ENCODE measurements at regions of chr20 and their contacts with region 1.

Region 1: DNA sequence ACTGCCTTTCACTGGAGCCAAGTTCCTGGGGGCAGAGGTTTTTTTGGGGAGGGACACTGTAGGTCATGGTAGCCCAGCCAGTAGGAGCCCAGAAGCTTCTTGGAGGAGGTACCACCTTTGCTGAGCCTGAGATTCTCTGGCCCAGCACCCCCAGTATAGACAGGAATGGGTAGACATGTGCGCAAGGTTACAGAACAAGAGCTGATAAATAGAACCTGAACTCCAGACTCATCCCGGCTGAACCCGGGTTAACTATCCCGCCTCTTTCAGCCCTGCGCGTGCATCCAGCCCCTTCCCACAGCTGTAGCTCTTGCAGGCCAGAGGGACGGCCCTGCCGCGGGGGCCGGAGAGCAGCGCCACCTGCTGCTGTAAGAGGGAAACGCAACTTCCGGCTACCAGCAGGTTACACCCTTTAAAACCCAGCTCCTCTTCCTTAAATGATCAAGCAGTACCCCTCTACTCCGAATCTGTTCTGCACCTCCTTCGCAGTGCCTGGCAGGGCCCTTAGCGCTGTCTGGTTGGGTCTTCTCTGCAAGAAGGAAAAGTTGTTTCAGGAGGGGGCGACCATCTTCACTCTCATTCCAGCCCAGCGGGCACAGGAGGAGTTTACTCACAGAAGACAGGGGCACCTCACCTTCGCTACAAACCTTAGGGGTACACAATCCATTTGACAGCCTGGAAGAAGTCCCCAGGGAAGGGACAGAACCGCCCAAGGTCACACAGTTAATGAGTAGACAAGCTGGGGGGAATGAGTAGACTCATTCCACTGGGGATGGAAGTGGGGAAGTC is 7.5 kb downstream of the SRXN1 start:
- H3K4me3 ChIP-seq: no peak overlapping the region
- H3K27ac ChIP-seq: no peak overlapping the region
- H3K4me1 ChIP-seq: no peaks in the 10 kb centered on the region
- CTCF ChIP-seq: peak; percentile 96

Region 2: GRCh38 chr20:354298-355064 is 291.0 kb before region 1 on chr20:
- CTCF ChIA-PET with region 1: interaction called, 14 read pairs
- POLR2A ChIA-PET with region 1: no interaction called
- H3K4me3 ChIP-seq: no peak overlapping the region
- H3K27ac ChIP-seq: no peak overlapping the region
- H3K4me1 ChIP-seq: no peaks in the 10 kb centered on the region
- CTCF ChIP-seq: peak; percentile 94

Region 3: DNA sequence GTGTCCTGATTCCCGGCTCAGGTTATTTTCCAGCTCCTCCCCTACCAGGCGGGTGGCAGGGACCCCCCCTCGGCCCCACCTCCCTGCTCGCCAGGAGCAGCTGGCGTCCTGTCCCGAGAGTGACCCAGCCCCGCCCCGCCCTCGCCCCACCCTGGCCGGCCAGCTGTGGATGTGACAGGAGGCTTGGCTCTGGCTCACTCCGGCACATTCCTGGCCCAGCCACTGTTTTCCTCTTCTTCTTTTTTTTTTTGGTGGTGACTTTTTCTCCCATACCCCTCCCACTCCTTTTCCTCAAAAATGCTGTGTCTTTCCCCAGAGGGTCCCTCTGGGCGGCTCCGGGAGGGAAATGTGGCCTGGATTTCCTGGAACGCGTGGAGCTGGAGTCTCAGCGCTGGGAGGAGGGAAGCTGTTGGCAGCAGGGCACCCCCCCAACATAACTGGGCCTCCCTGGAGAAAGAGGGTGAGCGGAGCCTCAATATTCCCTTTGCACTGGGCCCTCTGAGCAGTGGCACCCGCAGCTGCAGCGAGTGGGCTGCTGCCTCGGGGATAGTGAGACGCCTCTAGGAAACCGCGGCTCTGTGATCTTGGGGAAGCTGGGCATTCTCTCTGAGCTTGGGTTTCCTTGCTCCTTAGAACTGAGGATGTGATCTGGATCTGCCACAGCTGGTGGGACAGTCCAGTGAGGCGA is 73.6 kb before region 1 on chr20:
- CTCF ChIA-PET with region 1: interaction called, 21 read pairs
- POLR2A ChIA-PET with region 1: no interaction called
- H3K4me3 ChIP-seq: no peak overlapping the region
- H3K27ac ChIP-seq: no peak overlapping the region
- H3K4me1 ChIP-seq: no peaks in the 10 kb centered on the region
- CTCF ChIP-seq: no peak

Region 4: DNA sequence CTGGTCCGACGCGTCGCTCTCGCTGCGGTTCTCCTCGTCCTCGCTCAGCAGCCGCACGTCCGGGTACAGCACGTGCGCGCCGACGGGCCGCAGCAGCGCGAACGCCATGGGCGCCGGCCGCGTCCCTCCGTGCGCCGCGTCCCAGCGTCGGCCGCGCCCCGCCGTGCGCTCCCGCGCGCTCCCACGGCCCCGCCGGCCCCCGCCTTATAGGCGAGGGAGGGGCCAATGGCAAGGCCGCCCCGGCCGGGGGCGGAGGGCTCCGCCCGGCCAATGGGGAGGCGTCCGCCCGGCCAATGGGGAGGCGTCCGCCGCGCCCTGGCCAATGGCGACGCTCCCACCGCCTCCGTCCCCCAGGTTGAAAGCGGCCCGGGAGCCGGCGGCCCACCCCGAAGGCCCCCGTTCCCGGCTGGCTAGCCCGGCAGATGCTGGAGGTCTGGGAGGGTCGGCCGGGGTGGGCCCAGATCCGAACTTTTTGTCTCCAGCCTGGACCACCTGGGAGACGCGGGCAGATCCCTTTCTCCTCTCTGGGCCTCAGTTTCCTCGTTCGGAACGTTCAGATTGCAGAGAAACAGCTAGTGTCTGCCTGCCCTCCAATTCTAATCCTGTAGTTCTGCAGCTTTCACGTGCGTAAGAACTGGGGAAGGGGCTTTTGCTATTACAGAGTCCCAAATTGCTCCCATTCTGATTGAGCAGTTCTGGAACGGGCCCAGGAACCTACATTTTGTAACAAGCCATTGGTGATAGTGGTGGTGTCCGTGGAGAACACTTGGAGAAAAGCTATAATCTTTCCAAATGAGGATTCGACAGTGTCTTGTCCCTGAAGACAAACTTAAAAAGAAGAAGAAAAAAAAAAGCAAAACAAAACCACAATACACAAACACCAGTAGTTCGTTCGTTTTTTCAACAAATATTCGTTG is 35.1 kb before region 1 on chr20 and contains the start of gene TCF15:
- CTCF ChIA-PET with region 1: interaction called, 10 read pairs
- POLR2A ChIA-PET with region 1: no interaction called
- H3K4me3 ChIP-seq: no peak within 1 kb of the TSS
- H3K27ac ChIP-seq: no peak within 1 kb of the TSS
- H3K4me1 ChIP-seq: no peaks in the 10 kb centered on the region
- CTCF ChIP-seq: no peak

Region 5: GRCh38 chr20:658731-659291 is 13.3 kb after region 1 on chr20:
- CTCF ChIA-PET with region 1: interaction called, 11 read pairs
- POLR2A ChIA-PET with region 1: no interaction called
- H3K4me3 ChIP-seq: no peak overlapping the region
- H3K27ac ChIP-seq: no peak overlapping the region
- H3K4me1 ChIP-seq: no peaks in the 10 kb centered on the region
- CTCF ChIP-seq: no peak

Region 6: GRCh38 chr20:676977-677351 is 31.5 kb after region 1 on chr20:
- CTCF ChIA-PET with region 1: no interaction called
- POLR2A ChIA-PET with region 1: no interaction called
- H3K4me3 ChIP-seq: no peak overlapping the region
- H3K27ac ChIP-seq: no peak overlapping the region
- H3K4me1 ChIP-seq: peaks cover 6% of the 10 kb centered on the region
- CTCF ChIP-seq: no peak

Region 7: DNA sequence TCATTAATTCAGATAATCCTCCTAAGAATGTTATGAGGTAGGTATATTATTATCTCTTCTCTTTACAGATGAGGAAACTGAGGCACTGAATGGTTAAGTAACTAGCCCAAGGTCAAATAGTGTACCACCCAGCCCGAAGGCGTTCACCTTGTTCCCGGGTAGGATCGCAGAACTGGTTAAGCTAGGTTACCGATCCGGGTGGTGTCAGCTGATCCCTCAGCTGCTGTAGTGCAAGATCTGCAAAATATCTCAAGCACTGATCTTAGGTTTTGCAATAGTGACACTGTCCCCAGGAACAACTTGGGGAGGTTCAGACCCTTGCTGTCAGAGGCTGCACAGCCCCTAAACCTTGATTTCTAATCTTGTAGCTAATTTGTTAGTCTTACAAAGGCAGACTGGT is 94.6 kb after region 1 on chr20:
- CTCF ChIA-PET with region 1: interaction called, 15 read pairs
- POLR2A ChIA-PET with region 1: no interaction called
- H3K4me3 ChIP-seq: no peak overlapping the region
- H3K27ac ChIP-seq: no peak overlapping the region
- H3K4me1 ChIP-seq: no peaks in the 10 kb centered on the region
- CTCF ChIP-seq: no peak

Region 8: GRCh38 chr20:760751-761417 is 115.4 kb after region 1 on chr20:
- CTCF ChIA-PET with region 1: no interaction called
- POLR2A ChIA-PET with region 1: no interaction called
- H3K4me3 ChIP-seq: no peak overlapping the region
- H3K27ac ChIP-seq: no peak overlapping the region
- H3K4me1 ChIP-seq: no peaks in the 10 kb centered on the region
- CTCF ChIP-seq: peak; percentile 93

Measured in HEK293 (cell line).